CD8-positive, alpha-beta T cell (primary cell): ENCODE measurements at regions of chr17 and their contacts with region 1.

Region 1: GRCh38 chr17:73192894-73193701 is at the start of gene COG1:
- DNase-seq: peak; percentile 76 to 95 (median 89)
- ATAC-seq: peak; percentile 87
- H3K4me3 ChIP-seq: peak within 1 kb of the TSS; percentile 81 to 91
- H3K4me3 Mint-ChIP-seq: peak within 1 kb of the TSS; percentile 98
- H3K27ac ChIP-seq: peak within 1 kb of the TSS; percentile 79 to 83
- H3K27ac Mint-ChIP-seq: peak within 1 kb of the TSS; percentile 95
- H3K4me1 ChIP-seq: peaks cover 20% of the 10 kb centered on the region
- H3K4me1 Mint-ChIP-seq: peaks cover 27% of the 10 kb centered on the region
- H3K27me3 ChIP-seq: no peaks in the 10 kb centered on the region
- H3K27me3 Mint-ChIP-seq: no peaks in the 10 kb centered on the region
- CTCF ChIP-seq: no peak
- total RNA-seq, gene COG1: 91.3 to 95.6 TPM

Region 2: DNA sequence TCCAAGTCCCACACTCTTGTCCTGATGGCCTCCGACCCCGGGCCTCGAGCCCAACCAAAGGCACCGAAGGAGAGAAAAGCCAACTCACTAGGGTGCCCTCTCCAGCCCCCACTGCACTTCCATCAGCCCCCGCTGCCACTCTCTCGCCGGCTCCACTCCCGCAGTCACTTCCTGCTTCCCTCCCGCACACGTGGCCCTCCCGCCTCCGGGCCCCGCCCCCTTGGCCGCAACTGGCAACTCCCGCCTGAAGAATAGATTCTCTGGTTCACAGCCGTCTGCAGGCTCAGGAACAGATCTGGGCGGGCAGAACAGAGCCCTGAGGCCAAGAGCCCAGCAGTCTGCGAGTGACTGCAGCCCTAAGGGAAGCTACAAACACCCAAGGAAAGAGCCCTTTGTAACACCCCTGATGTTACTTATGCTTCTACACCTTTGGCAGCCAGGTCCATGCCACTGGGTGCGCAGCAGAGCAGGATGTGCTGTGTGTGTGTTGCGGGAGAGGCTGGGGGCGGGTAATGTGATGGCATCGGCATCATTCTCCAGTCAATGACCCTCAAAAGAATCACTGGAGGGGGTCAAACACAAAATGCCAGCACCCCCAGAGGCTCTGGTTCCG is 100.5 kb before region 1 on chr17 and contains the start of gene SLC39A11:
- CTCF ChIA-PET with region 1: no interaction called
- POLR2A ChIA-PET with region 1: no interaction called
- intact Hi-C with region 1: loop called in 1 of 2 experiments (anchors 2 kb)
- DNase-seq: peak; percentile 72 to 95 (median 89)
- ATAC-seq: peak; percentile 95
- H3K4me3 ChIP-seq: peak within 1 kb of the TSS; percentile 73 to 74
- H3K4me3 Mint-ChIP-seq: peak within 1 kb of the TSS; percentile 98
- H3K27ac ChIP-seq: peak within 1 kb of the TSS; percentile 41 to 58
- H3K27ac Mint-ChIP-seq: peak within 1 kb of the TSS; percentile 94
- H3K4me1 ChIP-seq: peaks cover 17% of the 10 kb centered on the region
- H3K4me1 Mint-ChIP-seq: peaks cover 33% of the 10 kb centered on the region
- H3K27me3 ChIP-seq: no peaks in the 10 kb centered on the region
- H3K27me3 Mint-ChIP-seq: no peaks in the 10 kb centered on the region
- CTCF ChIP-seq: no peak
- total RNA-seq, gene SLC39A11: 8.4 TPM

Region 3: GRCh38 chr17:73203135-73203787 is 10.2 kb after region 1 on chr17:
- CTCF ChIA-PET with region 1: interaction called, 15 read pairs
- POLR2A ChIA-PET with region 1: interaction called, 3 read pairs
- intact Hi-C with region 1: no loop called
- DNase-seq: peak in 1 of 9 experiments; percentile 50
- ATAC-seq: peak; percentile 30
- H3K4me3 ChIP-seq: no peak overlapping the region
- H3K4me3 Mint-ChIP-seq: peak overlapping the region; percentile 48
- H3K27ac ChIP-seq: peak overlapping the region; percentile 23 to 47
- H3K27ac Mint-ChIP-seq: peak overlapping the region; percentile 82
- H3K4me1 ChIP-seq: peaks cover 29% of the 10 kb centered on the region
- H3K4me1 Mint-ChIP-seq: peaks cover 39% of the 10 kb centered on the region
- H3K27me3 ChIP-seq: no peaks in the 10 kb centered on the region
- H3K27me3 Mint-ChIP-seq: no peaks in the 10 kb centered on the region
- CTCF ChIP-seq: no peak

Region 4: DNA sequence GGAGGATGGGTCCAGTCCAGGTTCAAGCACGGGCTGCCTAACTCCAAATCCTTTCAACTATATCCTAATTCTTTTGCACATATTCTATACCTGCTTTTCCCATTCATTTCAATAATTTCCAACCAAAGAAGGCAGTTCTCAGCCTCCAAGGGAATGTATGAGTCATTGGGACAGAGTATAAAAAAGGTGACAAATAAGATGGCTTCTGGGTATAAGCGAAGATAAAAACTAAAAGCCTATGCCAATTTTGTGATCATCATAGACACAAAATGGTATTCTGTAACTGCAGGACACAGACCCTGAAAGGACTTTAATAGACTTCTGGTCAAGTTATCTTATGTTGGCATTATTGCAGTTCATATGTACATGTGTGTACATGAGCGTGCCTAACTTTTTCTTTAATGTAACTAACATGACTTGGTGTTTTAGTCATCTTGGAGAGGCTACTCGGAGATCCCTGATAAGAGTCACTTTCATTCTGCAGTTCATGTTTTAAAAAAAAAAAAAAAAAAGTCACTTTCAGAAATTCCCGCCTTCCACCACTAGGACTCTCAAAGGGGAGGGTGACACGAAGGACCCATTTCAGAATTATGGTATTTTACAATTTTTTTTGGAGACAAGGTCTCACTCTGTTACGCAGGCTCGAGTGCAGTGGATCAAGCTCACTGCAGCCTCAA is 17.0 kb after region 1 on chr17:
- CTCF ChIA-PET with region 1: interaction called, 4 read pairs
- POLR2A ChIA-PET with region 1: interaction called, 3 read pairs
- intact Hi-C with region 1: loop called (anchors 1 to 2 kb)
- DNase-seq: peak in 2 of 9 experiments; percentile 37 to 54
- ATAC-seq: peak; percentile 18
- H3K4me3 ChIP-seq: no peak overlapping the region
- H3K4me3 Mint-ChIP-seq: no peak overlapping the region
- H3K27ac ChIP-seq: no peak overlapping the region
- H3K27ac Mint-ChIP-seq: peak overlapping the region; percentile 55
- H3K4me1 ChIP-seq: peaks cover 20% of the 10 kb centered on the region
- H3K4me1 Mint-ChIP-seq: peaks cover 31% of the 10 kb centered on the region
- H3K27me3 ChIP-seq: no peaks in the 10 kb centered on the region
- H3K27me3 Mint-ChIP-seq: no peaks in the 10 kb centered on the region
- CTCF ChIP-seq: no peak

Region 5: GRCh38 chr17:73255671-73256181 is 62.6 kb after region 1 on chr17:
- CTCF ChIA-PET with region 1: interaction called, 20 read pairs
- POLR2A ChIA-PET with region 1: no interaction called
- intact Hi-C with region 1: loop called in 1 of 2 experiments (anchors 1 kb)
- DNase-seq: peak; percentile 18 to 74 (median 59)
- ATAC-seq: peak; percentile 74
- H3K4me3 ChIP-seq: no peak overlapping the region
- H3K4me3 Mint-ChIP-seq: no peak overlapping the region
- H3K27ac ChIP-seq: no peak overlapping the region
- H3K27ac Mint-ChIP-seq: no peak overlapping the region
- H3K4me1 ChIP-seq: no peaks in the 10 kb centered on the region
- H3K4me1 Mint-ChIP-seq: peaks cover 4% of the 10 kb centered on the region
- H3K27me3 ChIP-seq: no peaks in the 10 kb centered on the region
- H3K27me3 Mint-ChIP-seq: peaks cover 2% of the 10 kb centered on the region
- CTCF ChIP-seq: peak; percentile 98

Region 6: GRCh38 chr17:73311781-73312641 is 118.9 kb after region 1 on chr17 and contains the start of gene CDC42EP4:
- CTCF ChIA-PET with region 1: interaction called, 4 read pairs
- POLR2A ChIA-PET with region 1: no interaction called
- intact Hi-C with region 1: loop called (anchors 1 to 2 kb)
- DNase-seq: peak; percentile 59 to 89 (median 82)
- ATAC-seq: peak; percentile 90
- H3K4me3 ChIP-seq: peak within 1 kb of the TSS; percentile 61 to 86
- H3K4me3 Mint-ChIP-seq: peak within 1 kb of the TSS; percentile 87
- H3K27ac ChIP-seq: peak within 1 kb of the TSS; percentile 11 to 64
- H3K27ac Mint-ChIP-seq: peak within 1 kb of the TSS; percentile 62
- H3K4me1 ChIP-seq: peaks cover 14% of the 10 kb centered on the region
- H3K4me1 Mint-ChIP-seq: peaks cover 17% of the 10 kb centered on the region
- H3K27me3 ChIP-seq: no peaks in the 10 kb centered on the region
- H3K27me3 Mint-ChIP-seq: no peaks in the 10 kb centered on the region
- CTCF ChIP-seq: no peak
- total RNA-seq, gene CDC42EP4: 3.5 to 4.4 TPM

Region 7: DNA sequence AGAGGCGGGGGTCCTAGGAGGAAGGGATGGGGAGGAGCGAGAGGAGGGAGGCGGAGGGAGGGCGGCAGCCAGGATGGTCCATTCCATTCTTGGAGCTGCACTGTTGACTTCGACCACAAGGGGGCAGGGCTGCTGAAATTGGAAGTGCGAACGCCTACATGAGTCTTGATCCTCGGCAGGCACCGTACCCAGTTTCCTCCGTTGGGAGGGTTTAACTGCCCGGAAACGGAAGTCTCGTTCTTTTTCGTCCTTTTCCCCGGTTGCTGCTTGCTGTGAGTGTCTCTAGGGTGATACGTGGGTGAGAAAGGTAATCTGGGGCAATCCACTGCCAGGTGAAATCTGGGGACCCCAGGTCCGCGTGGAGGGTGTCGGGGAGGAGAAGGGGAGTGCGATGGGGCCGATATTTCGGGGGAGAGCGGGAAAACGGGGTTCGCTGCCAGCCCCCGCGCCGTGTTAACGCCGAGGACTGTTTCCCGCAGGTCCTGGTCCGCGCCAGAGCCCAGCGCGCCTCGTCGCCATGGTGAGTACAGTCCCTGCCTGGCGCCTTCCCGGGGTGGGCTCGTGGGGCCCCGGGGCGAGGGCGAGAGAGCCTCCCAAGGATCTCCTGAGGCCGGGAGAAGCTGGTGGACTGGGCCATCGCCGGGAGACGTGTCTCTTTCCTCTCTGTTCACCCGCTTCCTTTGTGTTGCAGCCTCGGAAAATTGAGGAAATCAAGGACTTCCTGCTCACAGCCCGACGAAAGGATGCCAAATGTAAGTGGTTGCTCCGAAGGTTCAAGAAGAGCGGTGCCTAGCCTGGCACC is 1010.5 kb after region 1 on chr17 and contains the start of gene RPL38:
- CTCF ChIA-PET with region 1: no interaction called
- POLR2A ChIA-PET with region 1: no interaction called
- intact Hi-C with region 1: loop called (anchors 2 kb)
- DNase-seq: peak; percentile 87 to 98 (median 95)
- ATAC-seq: peak; percentile 93
- H3K4me3 ChIP-seq: peak within 1 kb of the TSS; percentile 96 to 100
- H3K4me3 Mint-ChIP-seq: peak within 1 kb of the TSS; percentile 99
- H3K27ac ChIP-seq: peak within 1 kb of the TSS; percentile 84 to 93
- H3K27ac Mint-ChIP-seq: peak within 1 kb of the TSS; percentile 97
- H3K4me1 ChIP-seq: peaks cover 36% of the 10 kb centered on the region
- H3K4me1 Mint-ChIP-seq: peaks cover 45% of the 10 kb centered on the region
- H3K27me3 ChIP-seq: peaks cover 0 to 7% of the 10 kb centered on the region in 2 experiments
- H3K27me3 Mint-ChIP-seq: peaks cover 12% of the 10 kb centered on the region
- CTCF ChIP-seq: peak; percentile 78
- total RNA-seq, gene RPL38: 2,036 to 2,081 TPM